Activated CD4-positive, alpha-beta T cell treated with anti-CD3 and anti-CD28 coated beads for 36 hours (primary cell): ENCODE measurements at regions of chr1 and their contacts with region 1.

Region 1: GRCh38 chr1:155562581-155563376 is at the start of gene ASH1L:
- DNase-seq: peak; percentile 96
- ATAC-seq: peak; percentile 83
- H3K4me3 Mint-ChIP-seq: peak within 1 kb of the TSS; percentile 90
- H3K27ac Mint-ChIP-seq: peak within 1 kb of the TSS; percentile 99
- H3K4me1 Mint-ChIP-seq: peaks cover 46% of the 10 kb centered on the region
- H3K27me3 Mint-ChIP-seq: no peaks in the 10 kb centered on the region
- total RNA-seq, gene ASH1L: 28.1 to 31.4 TPM

Region 2: DNA sequence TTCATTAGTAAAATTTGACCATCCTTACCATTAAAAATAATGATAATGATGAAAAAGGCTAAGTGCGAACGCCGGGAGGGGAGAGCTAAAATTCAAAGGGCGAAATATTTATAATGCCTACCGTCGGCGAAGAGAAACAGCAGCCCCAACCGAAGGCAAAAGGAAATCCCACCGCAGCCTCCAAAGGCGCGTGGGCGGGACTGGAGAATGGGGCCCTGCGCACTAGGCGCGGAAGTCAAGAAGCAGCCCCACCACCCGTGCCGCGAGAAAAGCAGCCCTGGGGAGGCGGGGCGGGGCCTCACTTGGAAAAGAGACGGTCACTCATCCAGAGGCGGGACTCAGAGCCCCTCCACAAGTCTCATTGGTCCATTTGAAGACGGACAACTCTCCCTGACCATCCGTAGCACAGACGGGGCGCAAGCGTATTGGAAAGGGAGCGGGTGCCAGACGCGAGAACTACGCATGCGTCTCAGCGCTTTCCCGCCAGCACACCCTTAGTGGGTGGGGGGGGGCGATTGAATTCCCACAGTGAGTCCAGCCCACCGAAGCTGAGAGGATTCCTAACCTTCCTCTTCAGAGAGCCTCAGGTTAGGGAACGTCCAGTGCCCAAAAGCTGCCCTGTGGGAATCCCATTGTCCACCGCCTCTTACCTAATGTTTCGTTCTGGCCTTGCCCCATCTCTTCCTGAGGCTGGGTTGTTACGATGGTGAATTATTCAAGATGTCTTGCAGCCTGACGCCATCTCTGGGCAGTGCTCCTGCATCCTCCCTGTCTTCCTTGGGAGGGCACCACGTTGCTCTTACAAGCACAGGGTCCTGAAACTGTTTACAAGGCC is 335.3 kb before region 1 on chr1:
- CTCF ChIA-PET with region 1: no interaction called
- POLR2A ChIA-PET with region 1: no interaction called
- intact Hi-C with region 1: loop called in 1 of 2 experiments (anchors 1 kb)
- DNase-seq: peak; percentile 99
- ATAC-seq: peak; percentile 98
- H3K4me3 Mint-ChIP-seq: peak overlapping the region; percentile 96
- H3K27ac Mint-ChIP-seq: peak overlapping the region; percentile 97
- H3K4me1 Mint-ChIP-seq: peaks cover 27% of the 10 kb centered on the region
- H3K27me3 Mint-ChIP-seq: no peaks in the 10 kb centered on the region

Region 3: GRCh38 chr1:155513300-155513916 is 49.4 kb before region 1 on chr1:
- CTCF ChIA-PET with region 1: no interaction called
- POLR2A ChIA-PET with region 1: no interaction called
- intact Hi-C with region 1: loop called in 1 of 2 experiments (anchors 10 kb)
- DNase-seq: no peak
- ATAC-seq: no peak
- H3K4me3 Mint-ChIP-seq: no peak overlapping the region
- H3K27ac Mint-ChIP-seq: no peak overlapping the region
- H3K4me1 Mint-ChIP-seq: peaks cover 52% of the 10 kb centered on the region
- H3K27me3 Mint-ChIP-seq: no peaks in the 10 kb centered on the region

Region 4: GRCh38 chr1:155540000-155540874 is 22.5 kb before region 1 on chr1:
- CTCF ChIA-PET with region 1: interaction called, 3 read pairs
- POLR2A ChIA-PET with region 1: interaction called, 9 read pairs
- intact Hi-C with region 1: loop called (anchors 1 kb)
- DNase-seq: peak; percentile 41
- ATAC-seq: no peak
- H3K4me3 Mint-ChIP-seq: no peak overlapping the region
- H3K27ac Mint-ChIP-seq: peak overlapping the region; percentile 86
- H3K4me1 Mint-ChIP-seq: peaks cover 61% of the 10 kb centered on the region
- H3K27me3 Mint-ChIP-seq: no peaks in the 10 kb centered on the region

Region 5: DNA sequence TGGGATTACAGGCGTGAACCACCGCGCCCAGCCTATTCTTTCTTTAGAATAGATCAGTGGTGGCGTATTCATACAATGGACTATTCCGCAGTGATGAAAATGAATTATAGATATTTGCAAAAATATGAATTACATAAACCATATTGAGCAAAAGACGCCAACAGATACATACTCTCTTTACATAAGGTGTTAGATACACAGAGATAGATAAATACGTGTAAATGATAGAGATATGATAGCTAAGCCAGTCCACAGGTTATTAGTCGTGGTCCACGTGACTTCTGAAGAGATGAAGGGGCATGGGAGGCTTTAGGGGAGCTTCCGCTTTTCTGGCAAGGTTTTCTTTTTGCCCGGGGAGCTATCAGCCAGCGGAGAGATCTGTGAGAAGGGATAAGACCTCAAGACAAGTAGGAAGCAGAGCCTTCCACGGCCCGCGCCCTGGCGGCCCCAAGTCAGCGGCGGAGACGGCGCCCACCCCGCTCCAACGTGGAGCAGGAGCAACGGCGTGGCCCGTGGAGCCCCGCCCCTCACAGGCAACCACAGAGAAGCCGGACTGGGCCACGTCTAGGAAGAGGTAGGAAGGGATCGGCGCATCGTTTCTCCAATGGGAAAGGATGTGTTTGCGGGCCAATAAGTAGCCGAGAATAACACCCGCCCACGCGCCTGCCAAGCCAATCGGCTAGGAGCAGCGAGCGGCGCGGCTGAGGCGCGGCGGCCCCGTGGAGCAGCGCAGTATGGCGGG is 46.9 kb after region 1 on chr1 and contains the start of gene MSTO1:
- CTCF ChIA-PET with region 1: interaction called, 4 read pairs
- POLR2A ChIA-PET with region 1: no interaction called
- intact Hi-C with region 1: loop called in 1 of 2 experiments (anchors 2 kb)
- DNase-seq: peak; percentile 100
- ATAC-seq: peak; percentile 97
- H3K4me3 Mint-ChIP-seq: peak within 1 kb of the TSS; percentile 95
- H3K27ac Mint-ChIP-seq: peak within 1 kb of the TSS; percentile 92
- H3K4me1 Mint-ChIP-seq: peaks cover 3% of the 10 kb centered on the region
- H3K27me3 Mint-ChIP-seq: no peaks in the 10 kb centered on the region
- total RNA-seq, gene MSTO1: 56.8 to 62.1 TPM

Region 6: GRCh38 chr1:155688324-155689080 is 125.7 kb after region 1 on chr1 and contains the start of gene YY1AP1:
- CTCF ChIA-PET with region 1: no interaction called
- POLR2A ChIA-PET with region 1: no interaction called
- intact Hi-C with region 1: loop called in 1 of 2 experiments (anchors 5 kb)
- DNase-seq: peak; percentile 95
- ATAC-seq: peak; percentile 86
- H3K4me3 Mint-ChIP-seq: peak within 1 kb of the TSS; percentile 97
- H3K27ac Mint-ChIP-seq: peak within 1 kb of the TSS; percentile 94
- H3K4me1 Mint-ChIP-seq: peaks cover 29% of the 10 kb centered on the region
- H3K27me3 Mint-ChIP-seq: no peaks in the 10 kb centered on the region
- total RNA-seq, gene YY1AP1: 59.6 to 76.0 TPM